Sigmoid colon (tissue), 7 donors: ENCODE measurements at regions of chr5 and their contacts with region 1.

Region 1: GRCh38 chr5:149731639-149732323 is 1.7 kb downstream of the PPARGC1B start:
- DNase-seq: peak; percentile 96
- H3K4me3 ChIP-seq: peak overlapping the region; percentile 79 to 99 (median 94)
- H3K27ac ChIP-seq: peak overlapping the region; percentile 89 to 99 (median 96)
- H3K4me1 ChIP-seq: peaks cover 0 to 52% (median 33%) of the 10 kb centered on the region in 4 donors
- H3K27me3 ChIP-seq: no peaks in the 10 kb centered on the region
- CTCF ChIP-seq: no peak
- EP300 ChIP-seq: no peak
- POLR2A ChIP-seq: peak; percentile 11 to 13

Region 2: DNA sequence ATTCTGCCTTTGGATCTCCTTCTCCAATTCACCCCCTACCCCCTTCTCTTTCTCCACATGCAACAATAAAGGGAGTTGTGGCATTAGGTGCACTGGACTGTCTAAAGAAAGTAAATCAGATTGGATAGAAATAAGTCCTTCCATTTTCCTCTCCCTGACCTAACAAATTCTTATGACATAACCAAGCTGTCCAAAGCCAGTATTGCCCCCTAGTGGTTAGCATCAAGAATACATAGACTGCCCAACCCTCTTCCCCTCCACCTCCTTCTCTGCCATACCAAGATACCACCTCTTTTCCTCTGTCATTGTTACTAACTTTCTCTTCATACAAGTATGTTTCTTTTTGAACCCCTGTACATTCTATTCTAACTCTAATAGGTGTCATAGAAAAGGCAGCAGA is 44.0 kb after region 1 on chr5:
- intact Hi-C with region 1: loop called (anchors 2 kb)
- DNase-seq: no peak
- H3K4me3 ChIP-seq: no peak overlapping the region
- H3K27ac ChIP-seq: peak overlapping the region; percentile 81 to 94 (median 92)
- H3K4me1 ChIP-seq: peaks cover 0 to 97% (median 90%) of the 10 kb centered on the region in 4 donors
- H3K27me3 ChIP-seq: no peaks in the 10 kb centered on the region
- CTCF ChIP-seq: peak in 3 of 4 experiments; percentile 32 to 51 (median 40)
- EP300 ChIP-seq: no peak
- POLR2A ChIP-seq: no peak

Region 3: DNA sequence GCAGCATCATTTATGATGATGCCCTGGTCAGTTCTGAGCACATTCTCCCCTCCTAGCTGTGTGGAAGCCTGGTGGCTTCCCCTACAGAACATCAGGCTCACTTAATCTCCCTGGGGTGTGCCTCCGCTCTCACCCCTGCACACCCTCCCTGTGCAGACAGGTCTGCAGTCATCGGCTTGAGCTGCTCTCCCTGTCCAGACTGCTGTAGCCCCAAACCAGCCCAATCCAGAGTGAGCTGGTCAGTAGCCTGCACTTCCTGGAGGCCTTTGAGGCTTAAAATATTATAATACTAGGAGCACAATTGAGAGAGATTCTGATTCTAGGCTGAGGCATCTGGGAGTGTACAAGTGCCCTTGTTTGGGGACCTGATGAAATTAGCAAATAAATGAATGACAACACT is 58.5 kb after region 1 on chr5:
- intact Hi-C with region 1: no loop called
- DNase-seq: no peak
- H3K4me3 ChIP-seq: no peak overlapping the region
- H3K27ac ChIP-seq: peak overlapping the region; percentile 39 to 97 (median 68)
- H3K4me1 ChIP-seq: peaks cover 0 to 69% (median 55%) of the 10 kb centered on the region in 4 donors
- H3K27me3 ChIP-seq: no peaks in the 10 kb centered on the region
- CTCF ChIP-seq: no peak
- EP300 ChIP-seq: no peak
- POLR2A ChIP-seq: no peak